Sigmoid colon (tissue), 7 donors: ENCODE measurements at regions of chr19 and their contacts with region 1.

Region 1: GRCh38 chr19:2391118-2391725 is 31.2 kb downstream of the TMPRSS9 start:
- DNase-seq: no peak
- H3K4me3 ChIP-seq: no peak overlapping the region
- H3K27ac ChIP-seq: no peak overlapping the region
- H3K4me1 ChIP-seq: no peaks in the 10 kb centered on the region
- H3K27me3 ChIP-seq: peaks cover 0 to 19% (median 4%) of the 10 kb centered on the region in 3 donors
- CTCF ChIP-seq: peak; percentile 59 to 82 (median 76)
- EP300 ChIP-seq: no peak
- POLR2A ChIP-seq: no peak

Region 2: DNA sequence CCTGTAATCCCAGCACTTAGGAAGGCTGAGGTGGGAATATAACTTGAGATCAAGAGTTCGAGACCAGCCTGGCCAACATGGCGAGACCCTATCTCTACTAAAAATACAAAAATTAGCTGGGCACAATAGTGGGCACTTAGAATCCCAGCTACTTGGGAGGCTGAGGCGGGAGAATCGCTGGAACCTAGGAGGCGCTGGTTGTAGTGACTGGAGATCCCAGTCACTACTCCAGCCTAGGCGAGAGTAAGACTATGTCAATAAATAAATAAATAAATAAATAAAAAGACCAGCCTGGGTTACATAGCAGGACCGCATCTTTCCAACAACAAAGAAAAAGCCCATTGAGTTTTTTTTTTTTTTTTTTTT is 229.6 kb before region 1 on chr19:
- intact Hi-C with region 1: loop called (anchors 2 kb)
- DNase-seq: no peak
- H3K4me3 ChIP-seq: no peak overlapping the region
- H3K27ac ChIP-seq: no peak overlapping the region
- H3K4me1 ChIP-seq: peaks cover 0 to 28% (median 26%) of the 10 kb centered on the region in 4 donors
- H3K27me3 ChIP-seq: no peaks in the 10 kb centered on the region
- CTCF ChIP-seq: no peak
- EP300 ChIP-seq: no peak
- POLR2A ChIP-seq: no peak